ENCODE measurements at regions of chr22 and their contacts with region 1.

Region 1: GRCh38 chr22:42780070-42780540 is 59.4 kb upstream of the A4GALT start:
- DNase-seq: peak; percentile 23
- H3K4me3 Mint-ChIP-seq: no peak overlapping the region
- H3K27ac Mint-ChIP-seq: no peak overlapping the region
- H3K4me1 Mint-ChIP-seq: no peaks in the 10 kb centered on the region
- H3K27me3 Mint-ChIP-seq: no peaks in the 10 kb centered on the region

Region 2: DNA sequence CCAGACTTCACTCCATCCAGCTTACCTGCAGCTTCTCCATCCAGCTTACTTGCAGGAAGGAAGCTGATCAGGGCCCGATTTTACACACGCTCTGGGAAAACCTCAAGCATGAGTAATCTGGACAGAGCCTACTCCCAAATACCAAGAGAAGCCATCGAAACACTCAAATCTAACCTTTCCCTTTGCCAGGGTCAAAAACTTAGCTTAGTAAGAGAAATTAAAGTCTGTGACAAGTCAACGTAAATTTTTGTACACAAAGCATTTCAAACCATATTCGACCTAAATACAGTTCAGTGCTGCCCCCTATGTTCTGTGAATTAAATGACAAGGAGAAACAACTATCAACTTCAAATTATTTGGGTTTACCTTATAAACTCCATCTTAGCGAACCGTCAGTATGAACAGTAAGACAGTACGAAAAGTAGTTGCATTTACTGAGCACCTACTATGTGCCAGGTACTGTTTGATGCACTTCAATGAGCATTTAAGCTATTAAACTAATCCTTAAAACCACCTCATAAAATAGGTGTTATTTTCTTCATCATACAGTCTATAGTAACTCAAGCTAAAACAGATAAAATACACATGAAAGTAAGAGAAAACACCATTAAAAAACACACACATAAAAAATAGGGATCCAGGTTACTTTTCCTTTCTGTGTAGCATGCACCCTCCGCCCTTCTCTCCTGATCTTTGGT is 40.1 kb after region 1 on chr22:
- intact Hi-C with region 1: loop called (anchors 2 kb)
- DNase-seq: no peak
- H3K4me3 Mint-ChIP-seq: no peak overlapping the region
- H3K27ac Mint-ChIP-seq: no peak overlapping the region
- H3K4me1 Mint-ChIP-seq: peaks cover 6% of the 10 kb centered on the region
- H3K27me3 Mint-ChIP-seq: no peaks in the 10 kb centered on the region

Region 3: GRCh38 chr22:43036282-43036829 is 256.3 kb after region 1 on chr22:
- intact Hi-C with region 1: loop called (anchors 1 kb)
- DNase-seq: no peak
- H3K4me3 Mint-ChIP-seq: no peak overlapping the region
- H3K27ac Mint-ChIP-seq: no peak overlapping the region
- H3K4me1 Mint-ChIP-seq: no peaks in the 10 kb centered on the region
- H3K27me3 Mint-ChIP-seq: no peaks in the 10 kb centered on the region

Region 4: DNA sequence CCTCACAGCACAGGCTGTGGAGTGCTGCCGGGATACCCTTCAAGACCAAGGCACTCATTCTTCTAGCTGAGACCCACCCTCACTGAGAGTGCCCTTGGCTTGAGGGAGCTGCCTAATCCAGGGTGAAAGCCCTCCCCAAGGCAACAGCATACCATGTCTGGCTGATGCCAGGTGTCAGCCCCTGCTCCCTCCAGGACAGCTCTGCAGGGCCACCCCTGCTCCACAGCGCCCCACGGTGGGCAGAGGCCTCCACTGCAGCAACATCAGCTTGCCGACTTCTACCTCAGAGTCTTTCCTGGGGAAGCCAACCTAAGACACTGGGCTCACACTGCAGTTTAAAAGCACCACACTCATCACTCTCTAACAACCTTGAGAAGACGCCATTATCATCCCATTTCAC is 280.1 kb after region 1 on chr22:
- intact Hi-C with region 1: loop called (anchors 1 kb)
- DNase-seq: peak; percentile 14
- H3K4me3 Mint-ChIP-seq: no peak overlapping the region
- H3K27ac Mint-ChIP-seq: no peak overlapping the region
- H3K4me1 Mint-ChIP-seq: no peaks in the 10 kb centered on the region
- H3K27me3 Mint-ChIP-seq: no peaks in the 10 kb centered on the region

Measured in activated T-helper 1 cell treated with anti-CD3 and anti-CD28 coated beads, Interleukin-12 subunit alpha, Interleukin-12 subunit beta, Interleukin-2, Interleukin-4 antibody, amounts not matched to agents 30 ng/mL and 10 ng/mL and 1 ng/mL, durations not matched to agents 14 hours and 24 hours and 36 hours (primary cell).